WTC11 (cell line): ENCODE measurements at regions of chr15 and their contacts with region 1.

Region 1: DNA sequence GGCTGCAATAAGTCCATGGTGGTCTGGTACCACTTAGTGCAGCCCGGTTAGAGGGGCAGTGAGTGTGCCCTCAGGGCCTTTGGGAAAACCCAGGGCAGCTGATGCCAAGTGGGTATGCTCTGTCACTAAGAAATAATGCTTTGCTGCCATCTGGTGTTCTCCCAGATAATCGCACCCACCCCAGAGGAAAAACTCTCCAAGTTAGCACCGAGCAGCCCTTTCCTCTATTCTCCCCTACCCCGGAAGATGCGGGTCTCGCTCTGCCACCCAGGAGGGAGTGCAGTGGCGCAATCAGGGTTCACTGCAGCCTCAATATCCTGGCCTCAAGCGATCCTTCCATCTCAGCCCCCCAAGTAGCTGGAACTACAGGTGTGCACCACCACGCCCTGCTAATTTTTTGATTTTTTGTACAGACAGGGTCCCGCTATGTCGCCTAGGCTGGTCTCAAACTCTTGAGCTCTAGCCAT is 21.3 kb upstream of the DAPK2 start:
- DNase-seq: peak; percentile 84
- ATAC-seq: peak; percentile 91
- H3K4me3 Mint-ChIP-seq: peak overlapping the region; percentile 27; the same call in 1 of the 2 replicates
- H3K27ac Mint-ChIP-seq: no peak overlapping the region
- H3K4me1 Mint-ChIP-seq: 0 out of 2 replicates have a peak, but pooled peaks cover 4% of the 10 kb centered on the region
- H3K27me3 Mint-ChIP-seq: no peaks in the 10 kb centered on the region; the same call in 1 of the 2 replicates
- CTCF ChIP-seq: peak; percentile 64

Region 2: GRCh38 chr15:63600616-63601025 is 467.0 kb before region 1 on chr15:
- CTCF ChIA-PET with region 1: interaction called, 13 read pairs
- POLR2A ChIA-PET with region 1: no interaction called
- DNase-seq: peak; percentile 67
- ATAC-seq: peak; percentile 60
- H3K4me3 Mint-ChIP-seq: peak overlapping the region; percentile 83
- H3K27ac Mint-ChIP-seq: no peak overlapping the region
- H3K4me1 Mint-ChIP-seq: peaks cover 21% of the 10 kb centered on the region
- H3K27me3 Mint-ChIP-seq: peaks cover 28% of the 10 kb centered on the region
- CTCF ChIP-seq: no peak

Region 3: DNA sequence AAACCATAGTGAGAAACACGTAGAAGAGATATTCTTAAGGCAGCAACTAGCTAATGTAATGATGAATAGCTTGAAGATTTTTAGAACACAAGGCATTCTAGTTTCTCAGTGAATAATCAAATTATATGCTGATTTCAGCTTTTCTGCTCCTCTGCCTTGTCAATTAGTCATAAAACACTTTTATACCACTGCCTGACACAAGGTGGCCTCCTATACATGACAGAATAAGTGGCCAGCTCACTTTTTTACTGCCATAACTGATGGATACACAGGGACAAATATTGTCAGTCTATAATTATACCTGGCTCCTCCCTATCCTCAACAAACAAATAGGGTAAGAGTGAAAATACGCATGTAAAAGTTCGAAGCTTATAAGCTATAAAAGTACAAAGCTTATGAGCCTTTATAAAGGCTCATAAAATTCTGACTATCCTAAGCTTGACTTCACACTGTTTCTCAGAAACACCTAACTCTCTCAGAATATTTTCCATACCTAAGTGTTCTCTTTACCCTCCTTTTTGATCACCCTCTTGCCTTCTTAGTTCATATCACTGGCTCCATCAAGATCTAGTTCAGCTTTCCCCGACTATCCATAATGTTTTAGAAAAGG is 315.4 kb before region 1 on chr15:
- CTCF ChIA-PET with region 1: interaction called, 33 read pairs
- POLR2A ChIA-PET with region 1: interaction called, 3 read pairs
- DNase-seq: no peak
- ATAC-seq: peak; percentile 55; the same call in 1 of the 2 replicates
- H3K4me3 Mint-ChIP-seq: no peak overlapping the region
- H3K27ac Mint-ChIP-seq: no peak overlapping the region
- H3K4me1 Mint-ChIP-seq: no peaks in the 10 kb centered on the region
- H3K27me3 Mint-ChIP-seq: no peaks in the 10 kb centered on the region
- CTCF ChIP-seq: peak; percentile 36

Region 4: GRCh38 chr15:64046347-64047153 is 21.0 kb before region 1 on chr15 and contains the start of gene DAPK2:
- CTCF ChIA-PET with region 1: interaction called, 13 read pairs
- POLR2A ChIA-PET with region 1: no interaction called
- DNase-seq: peak; percentile 73
- ATAC-seq: peak; percentile 88
- H3K4me3 Mint-ChIP-seq: peak within 1 kb of the TSS; percentile 74
- H3K27ac Mint-ChIP-seq: no peak within 1 kb of the TSS
- H3K4me1 Mint-ChIP-seq: peaks cover 7% of the 10 kb centered on the region
- H3K27me3 Mint-ChIP-seq: peaks cover 51% of the 10 kb centered on the region
- CTCF ChIP-seq: peak; percentile 60
- total RNA-seq, gene DAPK2: 1.0 to 2.3 TPM (median 1.5 TPM) in 3 replicates

Region 5: DNA sequence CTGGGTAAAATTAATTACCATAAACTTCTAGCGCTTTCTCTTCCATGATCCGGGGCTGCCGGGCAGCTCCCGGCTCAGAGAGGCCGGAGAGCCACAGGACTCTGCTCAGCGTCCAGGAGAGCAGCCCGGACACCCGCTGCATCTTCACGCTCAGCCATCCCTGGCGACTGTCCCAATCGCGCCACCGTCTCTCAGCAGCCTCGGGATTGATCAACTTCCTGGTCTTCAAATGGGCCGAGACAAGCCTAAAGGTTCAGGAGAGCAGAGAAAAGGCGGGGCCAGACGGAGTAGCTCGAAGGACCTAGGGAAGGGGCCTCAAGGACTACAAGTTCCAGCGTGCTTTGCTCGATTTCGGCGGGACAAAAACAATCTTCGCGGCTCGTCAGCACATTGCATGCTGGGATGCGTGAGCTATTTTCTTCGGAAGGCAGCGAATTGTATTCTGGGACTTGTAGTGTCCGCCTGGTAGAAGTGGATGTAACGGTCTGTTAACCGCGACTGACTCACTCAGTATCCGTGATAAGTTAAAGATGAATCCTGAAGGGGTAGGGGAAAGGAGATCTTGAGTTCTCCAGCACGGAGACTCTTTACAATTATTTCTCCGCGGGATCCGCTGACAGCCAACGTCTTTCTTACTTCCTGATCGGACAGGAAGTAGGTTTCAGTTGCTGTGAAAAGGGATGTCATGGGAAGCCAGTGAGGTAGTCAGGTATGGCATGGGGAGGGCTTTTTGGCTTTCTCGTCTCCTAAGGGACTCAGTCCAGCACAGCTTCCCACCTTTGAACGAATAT is 26.2 kb after region 1 on chr15 and contains the start of gene CIAO2A:
- CTCF ChIA-PET with region 1: interaction called, 14 read pairs
- POLR2A ChIA-PET with region 1: no interaction called
- DNase-seq: peak; percentile 95
- ATAC-seq: peak; percentile 86
- H3K4me3 Mint-ChIP-seq: peak within 1 kb of the TSS; percentile 99
- H3K27ac Mint-ChIP-seq: peak within 1 kb of the TSS; percentile 99
- H3K4me1 Mint-ChIP-seq: peaks cover 40% of the 10 kb centered on the region
- H3K27me3 Mint-ChIP-seq: no peaks in the 10 kb centered on the region
- CTCF ChIP-seq: no peak
- total RNA-seq, gene CIAO2A: 67.6 to 73.6 TPM (median 72.3 TPM) in 3 replicates